ENCODE measurements at regions of chr15 and their contacts with region 1.

Region 1: GRCh38 chr15:25933456-25934158 is 70.5 kb upstream of the ATP10A start:
- DNase-seq: peak; percentile 72 to 86 (median 84)
- H3K4me3 ChIP-seq: peak overlapping the region in 6 of 7 experiments; percentile 54 to 76 (median 63)
- H3K27ac ChIP-seq: no peak overlapping the region
- H3K4me1 ChIP-seq: peaks cover 0 to 6% (median 5%) of the 10 kb centered on the region in 4 experiments
- H3K27me3 ChIP-seq: peaks cover 0 to 4% (median 3%) of the 10 kb centered on the region in 5 experiments

Region 2: GRCh38 chr15:25695875-25696760 is 237.5 kb before region 1 on chr15:
- CTCF ChIA-PET with region 1: interaction called, 11 read pairs
- POLR2A ChIA-PET with region 1: no interaction called
- DNase-seq: no peak
- H3K4me3 ChIP-seq: no peak overlapping the region
- H3K27ac ChIP-seq: no peak overlapping the region
- H3K4me1 ChIP-seq: no peaks in the 10 kb centered on the region
- H3K27me3 ChIP-seq: no peaks in the 10 kb centered on the region

Region 3: DNA sequence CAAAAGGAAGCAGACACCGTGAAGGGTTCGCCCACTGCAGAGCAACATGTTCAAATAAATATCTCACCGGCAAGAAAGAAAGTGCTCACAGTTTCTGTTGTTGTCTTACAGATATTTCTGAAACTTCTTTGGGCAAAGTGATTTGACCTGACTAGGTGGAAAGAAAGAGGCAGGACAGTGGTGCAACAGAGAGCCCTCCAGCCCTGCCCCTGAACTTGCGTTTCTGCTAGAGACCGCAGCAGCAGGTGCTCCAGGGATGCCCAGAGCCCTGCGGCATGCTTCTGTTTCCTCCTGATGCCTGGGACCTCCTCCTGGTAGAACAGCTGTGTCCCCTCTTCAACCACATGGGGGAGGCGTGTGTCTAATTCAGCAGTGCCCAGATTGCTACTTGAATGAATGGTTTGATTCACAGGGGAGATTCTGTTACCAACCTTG is 193.9 kb before region 1 on chr15:
- CTCF ChIA-PET with region 1: interaction called, 17 read pairs
- POLR2A ChIA-PET with region 1: no interaction called
- DNase-seq: peak; percentile 74 to 97 (median 96)
- H3K4me3 ChIP-seq: no peak overlapping the region
- H3K27ac ChIP-seq: no peak overlapping the region
- H3K4me1 ChIP-seq: peaks cover 0 to 42% (median 29%) of the 10 kb centered on the region in 4 experiments
- H3K27me3 ChIP-seq: peaks cover 0 to 3% (median 0%) of the 10 kb centered on the region in 5 experiments

Region 4: GRCh38 chr15:25783607-25784540 is 149.7 kb before region 1 on chr15:
- CTCF ChIA-PET with region 1: interaction called, 10 read pairs
- POLR2A ChIA-PET with region 1: no interaction called
- DNase-seq: peak in 2 of 3 donors; percentile 18 to 42
- H3K4me3 ChIP-seq: no peak overlapping the region
- H3K27ac ChIP-seq: no peak overlapping the region
- H3K4me1 ChIP-seq: peaks cover 0 to 45% (median 15%) of the 10 kb centered on the region in 4 experiments
- H3K27me3 ChIP-seq: no peaks in the 10 kb centered on the region

Region 5: GRCh38 chr15:25967126-25967525 is 33.5 kb after region 1 on chr15:
- CTCF ChIA-PET with region 1: no interaction called
- POLR2A ChIA-PET with region 1: no interaction called
- DNase-seq: no peak
- H3K4me3 ChIP-seq: no peak overlapping the region
- H3K27ac ChIP-seq: no peak overlapping the region
- H3K4me1 ChIP-seq: peaks cover 0 to 5% (median 1%) of the 10 kb centered on the region in 4 experiments
- H3K27me3 ChIP-seq: no peaks in the 10 kb centered on the region